Thyroid gland (tissue), 4 donors: ENCODE measurements at regions of chr14 and their contacts with region 1.

Region 1: DNA sequence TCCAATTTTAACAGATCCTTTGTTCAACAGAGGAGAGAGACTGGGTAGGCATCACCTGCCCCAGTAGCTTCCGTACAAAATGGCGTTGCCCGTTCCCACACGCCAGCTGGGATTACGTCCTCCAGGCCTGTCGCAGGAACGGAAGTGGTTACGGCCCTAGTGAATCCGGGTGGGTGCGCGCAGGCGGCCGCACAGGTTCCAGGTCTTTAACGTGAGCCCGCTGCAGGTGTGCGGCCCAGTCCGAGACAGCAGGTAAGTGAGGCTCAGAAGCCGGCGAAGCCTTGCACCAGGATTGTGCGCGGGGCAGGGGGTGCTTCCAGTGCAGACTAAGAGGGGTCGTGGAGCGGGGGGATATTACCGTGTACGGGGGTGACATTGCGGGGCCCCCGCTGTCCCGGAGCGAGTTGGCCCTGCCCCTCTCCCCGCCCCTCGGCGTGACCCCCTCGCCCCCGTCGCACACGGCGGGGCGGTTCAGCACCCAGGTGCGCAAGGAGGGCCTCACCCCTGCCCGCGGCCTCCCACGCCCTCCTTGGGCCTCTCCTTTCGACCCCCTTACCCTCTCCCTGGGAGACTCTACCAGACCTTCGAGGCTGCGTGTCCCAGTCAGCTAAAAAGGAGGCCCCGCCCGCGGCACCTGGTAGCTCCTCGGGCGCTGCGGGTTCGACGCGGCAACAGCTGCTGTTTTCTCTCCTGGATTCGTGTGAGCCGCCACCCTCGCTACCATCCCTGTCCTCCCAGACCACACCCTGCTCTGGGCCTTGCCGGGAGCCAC is at the start of gene EXD2:
- DNase-seq: peak; percentile 92 to 93
- H3K4me3 ChIP-seq: peak within 1 kb of the TSS; percentile 21 to 96 (median 62)
- H3K27ac ChIP-seq: peak within 1 kb of the TSS; percentile 65 to 78 (median 72)
- H3K4me1 ChIP-seq: peaks cover 6% of the 10 kb centered on the region in 2 donors
- H3K27me3 ChIP-seq: no peaks in the 10 kb centered on the region
- CTCF ChIP-seq: no peak
- POLR2A ChIP-seq: peak in 1 of 2 donors; percentile 64
- total RNA-seq, gene EXD2: 21.2 to 28.3 (median 25.2) TPM

Region 2: GRCh38 chr14:69133206-69134125 is 58.1 kb before region 1 on chr14:
- intact Hi-C with region 1: loop called (anchors 10 kb)
- DNase-seq: peak; percentile 25 to 50
- H3K4me3 ChIP-seq: no peak overlapping the region
- H3K27ac ChIP-seq: peak overlapping the region in 2 of 3 donors; percentile 24 to 45
- H3K4me1 ChIP-seq: peaks cover 40 to 63% of the 10 kb centered on the region in 2 donors
- H3K27me3 ChIP-seq: no peaks in the 10 kb centered on the region
- CTCF ChIP-seq: no peak
- POLR2A ChIP-seq: no peak

Region 3: GRCh38 chr14:69153131-69153872 is 38.2 kb before region 1 on chr14:
- intact Hi-C with region 1: no loop called
- DNase-seq: peak; percentile 97
- H3K4me3 ChIP-seq: peak overlapping the region; percentile 33 to 92 (median 35)
- H3K27ac ChIP-seq: peak overlapping the region; percentile 80 to 97 (median 96)
- H3K4me1 ChIP-seq: peaks cover 10 to 40% of the 10 kb centered on the region in 2 donors
- H3K27me3 ChIP-seq: no peaks in the 10 kb centered on the region
- CTCF ChIP-seq: no peak
- POLR2A ChIP-seq: peak; percentile 55 to 94

Region 4: DNA sequence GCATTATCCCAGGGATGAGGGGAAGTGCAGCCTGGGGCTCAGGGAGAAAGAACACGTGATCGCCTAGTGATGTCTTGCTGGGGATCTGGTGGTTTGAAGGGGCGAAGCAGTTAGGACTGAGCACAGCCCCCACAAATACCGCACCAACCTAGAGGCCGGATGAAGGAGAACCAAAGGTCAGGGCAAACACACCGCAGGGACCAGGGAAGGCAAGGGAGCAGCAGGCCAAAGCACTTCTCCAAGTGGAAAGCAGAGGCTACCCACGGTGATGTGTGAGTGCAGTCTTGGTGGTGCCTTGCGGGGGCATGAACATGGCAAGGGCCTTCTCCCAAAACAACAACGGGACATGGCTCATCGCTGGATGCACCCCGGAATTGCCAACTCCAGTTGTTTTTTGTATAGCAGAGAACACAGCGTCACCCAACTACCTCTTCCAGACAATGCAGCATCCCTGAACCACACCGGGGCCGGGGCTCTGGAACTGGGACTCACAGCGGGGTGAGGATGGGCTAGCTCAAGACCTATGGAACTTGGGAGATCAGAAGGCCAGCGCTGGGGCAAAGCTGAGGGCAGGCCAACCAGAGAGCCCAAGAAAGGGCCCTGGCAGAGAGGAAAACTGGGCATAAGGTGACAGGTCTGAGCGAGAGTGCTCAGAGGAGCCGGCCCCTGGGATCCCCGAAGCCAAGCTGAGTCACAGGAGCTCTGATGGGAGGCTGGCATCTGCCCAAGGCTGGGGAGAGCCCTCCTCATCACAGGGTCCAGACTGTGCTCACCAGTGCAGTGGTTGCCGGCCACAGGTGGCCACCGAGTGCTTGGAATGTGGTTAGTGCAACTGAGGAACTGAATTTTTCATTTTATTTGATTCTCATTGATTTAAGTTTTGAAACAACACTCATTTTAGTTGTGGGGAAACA is 79.5 kb after region 1 on chr14:
- intact Hi-C with region 1: no loop called
- DNase-seq: no peak
- H3K4me3 ChIP-seq: no peak overlapping the region
- H3K27ac ChIP-seq: no peak overlapping the region
- H3K4me1 ChIP-seq: no peaks in the 10 kb centered on the region
- H3K27me3 ChIP-seq: no peaks in the 10 kb centered on the region
- CTCF ChIP-seq: no peak
- POLR2A ChIP-seq: no peak